Activated naive CD4-positive, alpha-beta T cell treated with anti-CD3 and anti-CD28 coated beads for 36 hours (primary cell): ENCODE measurements at regions of chr2 and their contacts with region 1.

Region 1: GRCh38 chr2:44244129-44244871 is 31.0 kb upstream of the SLC3A1 start:
- DNase-seq: peak; percentile 69
- H3K4me3 Mint-ChIP-seq: peak overlapping the region; percentile 71
- H3K27ac Mint-ChIP-seq: no peak overlapping the region
- H3K4me1 Mint-ChIP-seq: peaks cover 21% of the 10 kb centered on the region
- H3K27me3 Mint-ChIP-seq: no peaks in the 10 kb centered on the region

Region 2: GRCh38 chr2:44291281-44292248 is 47.3 kb after region 1 on chr2:
- CTCF ChIA-PET with region 1: interaction called, 6 read pairs
- intact Hi-C with region 1: loop called (anchors 1 kb)
- DNase-seq: peak; percentile 16
- H3K4me3 Mint-ChIP-seq: no peak overlapping the region
- H3K27ac Mint-ChIP-seq: no peak overlapping the region
- H3K4me1 Mint-ChIP-seq: peaks cover 9% of the 10 kb centered on the region
- H3K27me3 Mint-ChIP-seq: no peaks in the 10 kb centered on the region

Region 3: DNA sequence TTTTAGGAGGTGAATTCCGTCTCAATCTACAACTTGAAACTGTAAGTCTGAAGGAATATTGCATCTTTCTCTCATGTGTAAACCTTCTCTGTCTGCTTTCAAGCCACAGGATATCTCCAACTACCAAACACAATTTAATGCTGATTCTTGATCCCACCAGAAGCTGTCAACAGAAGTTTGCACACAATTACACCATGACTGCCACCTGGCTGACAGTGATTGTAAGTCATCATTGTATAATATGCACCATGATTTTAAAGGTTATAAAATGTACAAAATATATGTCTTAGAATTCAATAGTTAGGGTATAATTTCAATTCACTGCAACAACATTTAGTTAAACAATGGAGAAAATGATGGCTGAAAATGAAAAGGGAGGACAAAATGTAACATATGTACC is 98.6 kb after region 1 on chr2:
- CTCF ChIA-PET with region 1: interaction called, 9 read pairs
- intact Hi-C with region 1: loop called (anchors 1 kb)
- DNase-seq: peak; percentile 30
- H3K4me3 Mint-ChIP-seq: no peak overlapping the region
- H3K27ac Mint-ChIP-seq: no peak overlapping the region
- H3K4me1 Mint-ChIP-seq: no peaks in the 10 kb centered on the region
- H3K27me3 Mint-ChIP-seq: no peaks in the 10 kb centered on the region